ENCODE measurements at regions of chr13 and their contacts with region 1.

Region 1: DNA sequence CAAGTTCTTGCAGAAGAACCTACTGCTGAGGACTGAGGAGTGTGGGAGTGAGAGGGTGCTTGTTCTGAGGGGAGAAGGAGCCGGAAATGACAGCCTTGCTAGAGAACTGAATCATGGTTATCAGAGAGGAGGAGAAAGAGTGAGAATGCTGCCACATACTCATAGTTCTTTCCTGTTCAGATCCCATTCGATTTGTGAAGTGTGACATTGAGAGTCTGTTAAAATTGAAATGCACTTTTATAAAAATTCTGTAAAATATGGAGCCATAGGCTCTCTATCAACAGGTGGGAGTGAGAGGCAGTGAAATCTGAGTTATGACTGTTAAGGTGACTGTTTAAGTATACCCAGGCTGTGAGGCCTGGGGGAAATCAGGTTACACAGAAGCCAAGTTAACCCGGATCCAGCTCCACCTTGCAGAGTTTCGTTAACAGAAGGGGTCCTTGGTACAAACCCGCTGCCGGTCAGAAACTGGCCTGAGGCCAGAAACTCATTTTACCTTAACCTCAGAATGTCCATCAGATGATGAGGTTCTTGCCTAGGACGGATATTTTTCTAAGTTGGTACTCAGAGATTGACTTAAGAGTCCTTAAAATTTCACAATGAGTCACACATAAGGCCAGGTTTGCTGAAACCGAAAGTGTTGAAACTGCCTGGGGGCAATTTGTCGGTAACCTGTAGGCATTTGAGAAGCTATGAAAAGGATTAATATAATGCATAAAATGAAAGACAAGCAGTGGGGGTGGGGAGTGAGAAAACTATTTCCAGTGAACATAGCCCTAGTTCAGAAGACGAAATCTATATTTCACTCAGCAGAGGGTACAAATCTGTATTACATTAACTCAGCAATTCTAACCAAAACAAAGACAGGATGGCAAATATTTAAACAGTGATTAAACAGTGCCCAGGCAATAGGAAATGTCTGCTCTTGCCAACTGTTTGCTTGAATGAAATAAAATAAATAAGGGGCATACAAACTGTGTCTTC is 350.5 kb downstream of the KCNRG start:
- DNase-seq: peak; percentile 47
- ATAC-seq: peak; percentile 43
- H3K4me3 ChIP-seq: peak overlapping the region in 3 of 5 experiments; percentile 6 to 35 (median 17)
- H3K4me3 Mint-ChIP-seq: peak overlapping the region; percentile 76
- H3K27ac ChIP-seq: peak overlapping the region in 1 of 2 donors; percentile 6
- H3K27ac Mint-ChIP-seq: peak overlapping the region; percentile 76
- H3K4me1 ChIP-seq: peaks cover 16 to 37% of the 10 kb centered on the region in 2 donors
- H3K4me1 Mint-ChIP-seq: peaks cover 45% of the 10 kb centered on the region
- H3K27me3 ChIP-seq: no peaks in the 10 kb centered on the region
- H3K27me3 Mint-ChIP-seq: no peaks in the 10 kb centered on the region
- CTCF ChIP-seq: no peak

Region 2: GRCh38 chr13:50130123-50130946 is 235.4 kb before region 1 on chr13:
- CTCF ChIA-PET with region 1: no interaction called
- POLR2A ChIA-PET with region 1: interaction called, 5 read pairs
- intact Hi-C with region 1: loop called (anchors 5 kb)
- DNase-seq: peak; percentile 71
- ATAC-seq: no peak
- H3K4me3 ChIP-seq: peak overlapping the region; percentile 43 to 87 (median 61)
- H3K4me3 Mint-ChIP-seq: peak overlapping the region; percentile 92
- H3K27ac ChIP-seq: no peak overlapping the region
- H3K27ac Mint-ChIP-seq: peak overlapping the region; percentile 86
- H3K4me1 ChIP-seq: peaks cover 72 to 73% of the 10 kb centered on the region in 2 donors
- H3K4me1 Mint-ChIP-seq: peaks cover 63% of the 10 kb centered on the region
- H3K27me3 ChIP-seq: peaks cover 2 to 68% (median 47%) of the 10 kb centered on the region in 4 experiments
- H3K27me3 Mint-ChIP-seq: peaks cover 35% of the 10 kb centered on the region
- CTCF ChIP-seq: no peak

Region 3: GRCh38 chr13:50319635-50320255 is 46.0 kb before region 1 on chr13:
- CTCF ChIA-PET with region 1: no interaction called
- POLR2A ChIA-PET with region 1: no interaction called
- intact Hi-C with region 1: loop called (anchors 5 kb)
- DNase-seq: no peak
- ATAC-seq: no peak
- H3K4me3 ChIP-seq: no peak overlapping the region
- H3K4me3 Mint-ChIP-seq: no peak overlapping the region
- H3K27ac ChIP-seq: no peak overlapping the region
- H3K27ac Mint-ChIP-seq: peak overlapping the region; percentile 16
- H3K4me1 ChIP-seq: peaks cover 7 to 8% of the 10 kb centered on the region in 2 donors
- H3K4me1 Mint-ChIP-seq: peaks cover 10% of the 10 kb centered on the region
- H3K27me3 ChIP-seq: no peaks in the 10 kb centered on the region
- H3K27me3 Mint-ChIP-seq: no peaks in the 10 kb centered on the region
- CTCF ChIP-seq: no peak

Region 4: GRCh38 chr13:50387051-50387581 is 21.4 kb after region 1 on chr13:
- CTCF ChIA-PET with region 1: interaction called, 3 read pairs
- POLR2A ChIA-PET with region 1: no interaction called
- intact Hi-C with region 1: loop called (anchors 2 kb)
- DNase-seq: peak; percentile 46
- ATAC-seq: peak; percentile 71
- H3K4me3 ChIP-seq: no peak overlapping the region
- H3K4me3 Mint-ChIP-seq: no peak overlapping the region
- H3K27ac ChIP-seq: no peak overlapping the region
- H3K27ac Mint-ChIP-seq: no peak overlapping the region
- H3K4me1 ChIP-seq: no peaks in the 10 kb centered on the region
- H3K4me1 Mint-ChIP-seq: peaks cover 7% of the 10 kb centered on the region
- H3K27me3 ChIP-seq: no peaks in the 10 kb centered on the region
- H3K27me3 Mint-ChIP-seq: no peaks in the 10 kb centered on the region
- CTCF ChIP-seq: peak; percentile 42

Region 5: GRCh38 chr13:50635504-50635903 is 269.8 kb after region 1 on chr13:
- CTCF ChIA-PET with region 1: interaction called, 3 read pairs
- POLR2A ChIA-PET with region 1: no interaction called
- intact Hi-C with region 1: loop called (anchors 10 kb)
- DNase-seq: peak; percentile 90
- ATAC-seq: peak; percentile 79
- H3K4me3 ChIP-seq: no peak overlapping the region
- H3K4me3 Mint-ChIP-seq: peak overlapping the region; percentile 63
- H3K27ac ChIP-seq: peak overlapping the region; percentile 92 to 95
- H3K27ac Mint-ChIP-seq: peak overlapping the region; percentile 96
- H3K4me1 ChIP-seq: peaks cover 26 to 30% of the 10 kb centered on the region in 2 donors
- H3K4me1 Mint-ChIP-seq: peaks cover 44% of the 10 kb centered on the region
- H3K27me3 ChIP-seq: no peaks in the 10 kb centered on the region
- H3K27me3 Mint-ChIP-seq: no peaks in the 10 kb centered on the region
- CTCF ChIP-seq: no peak

Measured in B cell (primary cell).